Caco-2 (cell line): ENCODE measurements at regions of chr10 and their contacts with region 1.

Region 1: GRCh38 chr10:14056610-14057332 is 274.0 kb downstream of the FRMD4A start:
- DNase-seq: peak in 1 of 2 experiments; percentile 28
- H3K4me3 ChIP-seq: no peak overlapping the region
- H3K4me3 Mint-ChIP-seq: no peak overlapping the region
- H3K27ac Mint-ChIP-seq: no peak overlapping the region
- H3K4me1 ChIP-seq: no peaks in the 10 kb centered on the region
- H3K4me1 Mint-ChIP-seq: no peaks in the 10 kb centered on the region
- H3K27me3 ChIP-seq: no peaks in the 10 kb centered on the region
- H3K27me3 Mint-ChIP-seq: no peaks in the 10 kb centered on the region
- CTCF ChIP-seq: no peak

Region 2: DNA sequence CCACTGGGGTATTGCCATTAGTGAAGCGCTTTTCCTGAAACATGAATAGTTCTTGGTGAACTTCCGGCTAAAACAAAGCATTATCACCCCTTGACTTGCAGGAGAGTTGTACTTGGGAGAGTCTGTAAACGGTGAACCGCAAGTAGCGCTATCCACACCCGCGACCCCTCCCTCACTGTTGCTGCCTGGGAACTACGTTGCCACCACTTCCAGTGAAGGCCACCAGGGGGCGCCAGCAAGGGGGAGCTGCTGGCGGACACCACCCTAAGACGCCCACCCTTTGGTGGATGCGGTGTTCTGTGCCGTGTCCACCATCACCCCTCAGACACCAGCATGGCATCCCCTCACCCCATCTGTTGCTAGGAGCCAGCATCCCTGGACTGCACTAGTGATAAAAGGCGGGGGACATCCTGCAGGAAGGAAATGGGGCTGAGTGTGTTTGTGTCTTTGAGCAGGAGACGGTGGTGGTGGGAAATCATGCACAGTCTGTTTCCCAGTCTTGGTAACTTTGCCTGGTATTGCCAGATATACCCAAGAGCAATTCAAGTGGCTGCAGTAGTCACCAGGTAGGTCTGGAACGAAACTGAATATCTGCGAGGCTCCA is 24.3 kb before region 1 on chr10:
- CTCF ChIA-PET with region 1: no interaction called
- POLR2A ChIA-PET with region 1: no interaction called
- intact Hi-C with region 1: loop called (anchors 1 kb)
- DNase-seq: peak in 1 of 2 experiments; percentile 68
- H3K4me3 ChIP-seq: no peak overlapping the region
- H3K4me3 Mint-ChIP-seq: no peak overlapping the region
- H3K27ac Mint-ChIP-seq: no peak overlapping the region
- H3K4me1 ChIP-seq: no peaks in the 10 kb centered on the region
- H3K4me1 Mint-ChIP-seq: no peaks in the 10 kb centered on the region
- H3K27me3 ChIP-seq: no peaks in the 10 kb centered on the region
- H3K27me3 Mint-ChIP-seq: peaks cover 3% of the 10 kb centered on the region
- CTCF ChIP-seq: peak; percentile 70 to 95